ENCODE measurements at regions of chr18 and their contacts with region 1.

Region 1: DNA sequence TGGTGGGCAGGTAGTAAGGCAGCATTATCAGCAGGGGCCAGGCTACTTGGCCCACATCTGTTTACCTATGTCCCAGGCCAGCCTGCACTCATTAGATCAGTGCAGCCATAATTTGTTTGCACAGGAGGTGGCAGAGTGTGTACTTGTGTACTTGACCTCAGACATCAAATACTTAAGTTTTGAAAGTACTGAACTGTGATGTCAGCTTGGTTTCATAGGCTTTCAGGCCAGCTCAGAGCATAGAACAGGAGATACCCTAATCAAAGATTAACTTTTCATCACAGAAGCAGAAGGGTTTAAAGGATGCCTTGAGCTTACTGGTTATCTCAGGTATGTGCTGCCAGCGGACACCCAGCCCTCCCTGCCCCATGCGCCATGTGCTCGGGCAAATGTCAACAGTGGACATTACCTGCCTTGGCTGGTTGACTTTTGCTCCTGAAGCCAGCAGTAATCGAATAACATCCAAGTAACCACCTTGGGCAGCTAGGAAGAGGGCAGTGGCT is 33.2 kb downstream of the ANKRD29 start:
- DNase-seq: no peak
- H3K4me3 ChIP-seq: no peak overlapping the region
- H3K27ac ChIP-seq: no peak overlapping the region
- H3K4me1 ChIP-seq: no peaks in the 10 kb centered on the region
- H3K27me3 ChIP-seq: no peaks in the 10 kb centered on the region
- CTCF ChIP-seq: no peak
- POLR2A ChIP-seq: no peak

Region 2: GRCh38 chr18:23812546-23813440 is 183.3 kb after region 1 on chr18:
- intact Hi-C with region 1: loop called (anchors 10 kb)
- DNase-seq: no peak
- H3K4me3 ChIP-seq: no peak overlapping the region
- H3K27ac ChIP-seq: no peak overlapping the region
- H3K4me1 ChIP-seq: peaks cover 8% of the 10 kb centered on the region
- H3K27me3 ChIP-seq: no peaks in the 10 kb centered on the region
- CTCF ChIP-seq: peak in 2 of 3 experiments; percentile 33 to 44
- POLR2A ChIP-seq: no peak